PC-9 (cell line): ENCODE measurements at regions of chr17 and their contacts with region 1.

Region 1: DNA sequence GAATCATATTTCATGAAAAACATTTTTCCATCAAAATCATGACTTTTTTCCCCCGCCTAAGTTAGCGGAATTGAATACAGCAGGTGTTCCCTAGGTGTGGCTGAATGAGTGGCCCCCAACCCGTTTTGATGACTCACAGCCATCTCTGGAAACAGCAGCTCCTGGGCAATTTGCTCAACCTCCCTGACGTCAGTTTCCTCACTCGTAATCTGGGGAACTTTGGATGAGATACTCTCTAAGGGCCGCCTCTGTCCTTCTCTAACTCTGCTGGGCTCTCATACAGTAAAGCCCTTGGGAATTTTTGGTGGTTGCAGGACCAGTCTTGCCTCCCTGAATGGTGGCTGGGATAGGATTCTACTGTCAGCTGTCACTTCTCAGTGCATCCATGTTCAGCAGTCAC is 11.6 kb upstream of the NTN1 start:
- DNase-seq: no peak
- H3K4me3 ChIP-seq: no peak overlapping the region
- H3K27ac ChIP-seq: no peak overlapping the region
- H3K4me1 ChIP-seq: no peaks in the 10 kb centered on the region
- H3K27me3 ChIP-seq: no peaks in the 10 kb centered on the region
- CTCF ChIP-seq: no peak

Region 2: GRCh38 chr17:9714801-9715200 is 705.1 kb after region 1 on chr17:
- CTCF ChIA-PET with region 1: no interaction called
- POLR2A ChIA-PET with region 1: interaction called, 12 read pairs
- intact Hi-C with region 1: no loop called
- DNase-seq: no peak
- H3K4me3 ChIP-seq: no peak overlapping the region
- H3K27ac ChIP-seq: no peak overlapping the region
- H3K4me1 ChIP-seq: no peaks in the 10 kb centered on the region
- H3K27me3 ChIP-seq: no peaks in the 10 kb centered on the region
- CTCF ChIP-seq: no peak